Breast epithelium (tissue), 4 donors: ENCODE measurements at regions of chr13 and their contacts with region 1.

Region 1: DNA sequence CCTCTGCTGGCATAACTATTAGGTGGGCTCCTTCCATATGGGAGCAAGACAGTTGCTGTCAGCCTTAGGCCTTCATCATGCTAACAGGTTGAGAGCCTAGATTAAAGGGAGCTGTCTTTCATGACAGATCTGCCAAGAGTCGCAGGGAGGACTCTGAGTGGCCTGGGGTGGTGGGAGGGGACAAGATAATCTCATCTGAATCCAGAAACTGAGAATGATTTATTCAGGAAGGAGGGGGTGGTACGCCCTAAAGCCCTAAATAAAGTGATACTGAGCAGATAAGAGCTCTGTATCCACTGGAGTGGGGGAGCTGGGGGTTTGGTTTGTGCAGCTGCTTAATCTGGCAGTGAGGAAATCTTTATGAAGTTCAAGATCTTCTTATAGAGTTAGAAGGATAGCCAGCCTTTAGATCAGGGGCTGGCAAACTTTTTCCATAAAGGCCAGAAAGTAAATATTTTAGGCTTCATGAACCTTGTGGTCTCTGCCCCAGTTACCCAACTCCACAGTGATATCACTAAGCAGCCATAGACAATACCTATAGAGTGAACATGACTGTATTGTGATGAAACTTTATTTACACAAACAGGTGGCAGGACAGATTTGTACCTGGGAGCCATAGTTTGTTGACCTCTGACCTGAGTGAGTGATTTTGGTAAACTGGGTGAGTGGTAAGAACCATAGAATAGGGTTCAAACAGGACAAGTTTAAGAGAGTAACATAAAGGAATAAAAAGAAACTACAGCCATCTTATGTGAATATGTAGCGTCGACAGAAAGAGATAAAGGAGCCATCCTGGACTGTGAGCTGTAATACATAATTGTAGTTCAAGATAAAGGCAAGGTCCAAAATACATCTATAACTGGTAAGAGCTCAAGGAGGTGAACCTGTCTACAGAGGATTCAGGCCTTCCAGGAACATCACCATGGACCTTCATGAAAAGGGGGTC is 9.8 kb upstream of the STK24 start:
- DNase-seq: no peak
- H3K4me3 ChIP-seq: no peak overlapping the region
- H3K27ac ChIP-seq: no peak overlapping the region
- H3K4me1 ChIP-seq: no peaks in the 10 kb centered on the region
- H3K27me3 ChIP-seq: no peaks in the 10 kb centered on the region
- CTCF ChIP-seq: no peak
- POLR2A ChIP-seq: no peak

Region 2: DNA sequence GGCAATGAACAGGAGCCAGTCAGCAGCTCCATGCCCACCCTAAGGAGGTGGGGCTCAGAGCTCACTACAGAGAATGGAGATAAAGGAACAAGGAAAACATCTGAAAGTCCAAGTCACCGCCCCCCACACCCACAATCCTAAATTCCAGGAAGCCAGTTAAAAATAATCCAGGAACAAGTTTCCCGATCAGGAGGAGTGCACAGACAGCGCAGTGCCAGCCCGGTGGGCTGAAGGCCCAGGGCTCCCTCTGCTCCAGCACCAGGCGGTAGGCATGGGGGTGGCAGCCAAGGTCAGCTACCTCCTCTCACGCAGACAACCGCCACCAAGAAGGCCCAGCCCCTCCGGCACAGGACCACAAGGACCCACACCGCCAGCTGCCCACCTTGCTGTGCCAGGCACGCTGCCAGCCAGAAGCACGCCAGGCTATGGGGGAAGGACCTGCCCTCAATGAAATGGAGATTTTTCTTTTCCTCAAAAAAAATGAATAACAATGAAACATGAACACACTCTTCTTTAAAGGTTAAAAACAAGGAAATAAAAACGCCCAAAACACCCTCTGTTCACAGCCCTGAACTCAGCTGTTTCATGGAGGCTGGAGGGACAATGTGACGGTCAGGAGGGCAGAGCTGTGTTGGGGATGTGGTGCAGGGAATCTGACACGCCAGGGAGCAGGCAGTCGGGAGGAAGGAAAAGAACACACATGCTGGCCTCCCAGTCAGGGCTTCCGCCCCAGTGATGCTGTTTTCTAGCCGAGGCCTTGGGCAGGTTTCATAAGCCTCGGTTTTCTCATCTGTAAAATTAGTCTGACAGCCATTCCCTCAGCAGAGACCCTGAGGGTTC is 20.7 kb before region 1 on chr13:
- intact Hi-C with region 1: loop called (anchors 2 kb)
- DNase-seq: peak in 1 of 2 donors; percentile 38
- H3K4me3 ChIP-seq: peak overlapping the region in 2 of 3 donors; percentile 21 to 57
- H3K27ac ChIP-seq: peak overlapping the region; percentile 81 to 90
- H3K4me1 ChIP-seq: peaks cover 8 to 17% of the 10 kb centered on the region in 2 donors
- H3K27me3 ChIP-seq: no peaks in the 10 kb centered on the region
- CTCF ChIP-seq: no peak
- POLR2A ChIP-seq: no peak